ENCODE measurements at regions of chr1 and their contacts with region 1.

Region 1: DNA sequence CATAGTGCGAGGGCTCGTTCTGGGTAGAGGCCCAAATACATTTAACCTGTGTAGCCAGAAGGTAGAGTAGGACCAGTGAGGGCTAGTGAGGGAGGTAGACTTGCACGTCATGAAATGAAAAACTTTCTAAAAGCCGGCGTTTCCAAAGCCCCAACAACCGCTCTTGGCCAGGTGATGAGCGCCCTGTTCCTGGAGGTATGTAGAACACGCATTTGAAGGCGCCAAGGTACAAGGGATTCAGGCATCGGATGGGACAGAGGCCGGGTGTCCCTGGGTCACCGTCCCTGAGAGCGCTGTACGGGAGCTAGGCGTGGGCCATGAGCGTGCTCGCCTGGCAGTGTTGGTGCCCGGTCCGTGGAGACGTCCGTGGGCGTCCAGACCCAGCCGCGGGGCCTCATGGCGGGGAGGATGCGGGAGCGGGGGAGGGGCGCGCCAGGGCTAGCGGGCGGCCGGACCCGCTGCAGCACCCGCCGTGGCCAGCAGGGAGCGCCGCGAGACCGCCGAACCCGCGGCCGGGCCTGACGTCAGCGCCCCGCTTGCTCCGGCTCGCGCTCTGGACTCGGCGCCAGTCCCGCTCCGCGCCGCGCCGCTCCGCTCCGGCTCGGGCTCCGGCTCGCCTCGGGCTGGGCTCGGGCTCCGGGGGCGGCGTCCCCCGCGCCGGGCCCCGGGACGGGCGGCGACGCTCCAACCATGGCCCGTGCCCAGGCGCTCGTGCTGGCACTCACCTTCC is at the start of gene PTPRU:
- DNase-seq: peak; percentile 65 to 79 (median 73)
- H3K4me3 ChIP-seq: peak within 1 kb of the TSS; percentile 26 to 77 (median 36)
- H3K4me3 Mint-ChIP-seq: peak within 1 kb of the TSS; percentile 80 to 97
- H3K27ac ChIP-seq: no peak within 1 kb of the TSS
- H3K27ac Mint-ChIP-seq: peak within 1 kb of the TSS in 2 of 7 donors; percentile 13 to 68
- H3K4me1 ChIP-seq: peaks cover 24 to 31% of the 10 kb centered on the region in 2 donors
- H3K4me1 Mint-ChIP-seq: peaks cover 28% of the 10 kb centered on the region
- H3K27me3 ChIP-seq: peaks cover 26 to 61% of the 10 kb centered on the region in 2 donors
- H3K27me3 Mint-ChIP-seq: peaks cover 52 to 66% (median 57%) of the 10 kb centered on the region in 3 donors
- CTCF ChIP-seq: peak; percentile 86
- polyA plus RNA-seq, gene PTPRU: 0.42 to 1.4 TPM in 2 of 3 donors, not detected in the other

Region 2: GRCh38 chr1:29259802-29260441 is 23.8 kb after region 1 on chr1:
- intact Hi-C with region 1: no loop called
- DNase-seq: peak; percentile 9 to 32 (median 17)
- H3K4me3 ChIP-seq: peak overlapping the region; percentile 17 to 73 (median 41)
- H3K4me3 Mint-ChIP-seq: peak overlapping the region; percentile 77 to 91
- H3K27ac ChIP-seq: no peak overlapping the region
- H3K27ac Mint-ChIP-seq: no peak overlapping the region
- H3K4me1 ChIP-seq: peaks cover 9 to 11% of the 10 kb centered on the region in 2 donors
- H3K4me1 Mint-ChIP-seq: peaks cover 9% of the 10 kb centered on the region
- H3K27me3 ChIP-seq: peaks cover 28 to 59% of the 10 kb centered on the region in 2 donors
- H3K27me3 Mint-ChIP-seq: peaks cover 42 to 62% (median 54%) of the 10 kb centered on the region in 3 donors
- CTCF ChIP-seq: no peak

Region 3: DNA sequence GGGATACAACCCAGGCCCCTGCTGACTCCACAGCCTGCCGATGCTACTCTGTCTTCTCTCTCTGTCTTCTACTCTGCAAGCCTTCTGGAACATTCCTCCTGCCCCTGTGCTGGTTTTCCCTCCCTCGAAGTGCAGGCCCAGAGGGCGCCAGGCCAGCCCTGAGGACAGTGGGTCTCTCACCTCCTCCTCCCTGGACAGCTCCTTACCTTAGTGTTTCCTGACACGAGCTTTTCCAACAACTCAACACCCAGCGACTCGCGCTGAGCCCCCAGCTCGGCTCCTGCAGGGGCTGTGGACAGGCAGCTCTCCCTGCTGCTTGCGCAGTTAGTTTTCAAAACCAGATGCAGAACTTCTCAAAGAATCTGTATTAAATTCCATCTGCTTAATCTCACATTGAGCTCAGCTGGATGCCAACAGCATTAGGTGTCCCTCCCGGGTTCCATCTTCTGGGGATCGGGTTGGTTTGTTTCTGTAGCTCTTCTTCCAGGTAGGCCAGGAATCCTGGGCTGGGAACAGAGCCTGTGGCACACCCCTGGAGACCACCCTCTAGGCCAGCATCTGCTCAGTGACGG is 54.4 kb after region 1 on chr1:
- intact Hi-C with region 1: no loop called
- DNase-seq: no peak
- H3K4me3 ChIP-seq: no peak overlapping the region
- H3K4me3 Mint-ChIP-seq: no peak overlapping the region
- H3K27ac ChIP-seq: no peak overlapping the region
- H3K27ac Mint-ChIP-seq: no peak overlapping the region
- H3K4me1 ChIP-seq: no peaks in the 10 kb centered on the region
- H3K4me1 Mint-ChIP-seq: peaks cover 2% of the 10 kb centered on the region
- H3K27me3 ChIP-seq: no peaks in the 10 kb centered on the region
- H3K27me3 Mint-ChIP-seq: peaks cover 0 to 11% (median 8%) of the 10 kb centered on the region in 3 donors
- CTCF ChIP-seq: no peak

Region 4: DNA sequence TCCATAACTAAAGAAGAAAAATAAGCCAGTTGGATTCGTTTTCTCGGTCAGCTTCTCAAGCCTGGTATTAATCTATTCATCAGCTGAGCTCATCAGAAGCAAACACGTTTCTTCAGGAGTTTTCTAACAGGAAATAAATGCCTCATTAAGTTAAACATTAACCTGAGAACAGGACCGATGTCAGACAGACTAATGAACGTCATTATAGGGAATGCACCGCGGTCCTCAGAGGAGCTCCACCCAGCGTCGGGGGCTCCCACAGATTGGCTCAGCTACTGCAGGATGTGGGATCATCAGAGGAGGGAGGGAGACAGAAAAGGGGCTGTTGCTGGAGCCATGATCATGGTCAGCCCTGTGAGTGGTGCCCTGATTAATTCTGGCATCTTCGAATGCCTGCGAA is 615.6 kb after region 1 on chr1:
- intact Hi-C with region 1: loop called in 1 of 2 experiments (anchors 5 kb)
- DNase-seq: no peak
- H3K4me3 ChIP-seq: no peak overlapping the region
- H3K4me3 Mint-ChIP-seq: no peak overlapping the region
- H3K27ac ChIP-seq: no peak overlapping the region
- H3K27ac Mint-ChIP-seq: peak overlapping the region in 1 of 7 donors; percentile 31
- H3K4me1 ChIP-seq: no peaks in the 10 kb centered on the region
- H3K4me1 Mint-ChIP-seq: no peaks in the 10 kb centered on the region
- H3K27me3 ChIP-seq: no peaks in the 10 kb centered on the region
- H3K27me3 Mint-ChIP-seq: peaks cover 0 to 7% (median 4%) of the 10 kb centered on the region in 3 donors
- CTCF ChIP-seq: no peak

Region 5: GRCh38 chr1:30379684-30380624 is 1143.8 kb after region 1 on chr1:
- intact Hi-C with region 1: loop called (anchors 5 kb)
- DNase-seq: peak; percentile 44 to 59 (median 46)
- H3K4me3 ChIP-seq: no peak overlapping the region
- H3K4me3 Mint-ChIP-seq: no peak overlapping the region
- H3K27ac ChIP-seq: no peak overlapping the region
- H3K27ac Mint-ChIP-seq: no peak overlapping the region
- H3K4me1 ChIP-seq: peaks cover 0 to 3% of the 10 kb centered on the region in 2 donors
- H3K4me1 Mint-ChIP-seq: peaks cover 2% of the 10 kb centered on the region
- H3K27me3 ChIP-seq: no peaks in the 10 kb centered on the region
- H3K27me3 Mint-ChIP-seq: peaks cover 3 to 11% (median 7%) of the 10 kb centered on the region in 3 donors
- CTCF ChIP-seq: peak; percentile 88

Region 6: GRCh38 chr1:30707412-30708360 is 1471.6 kb after region 1 on chr1:
- intact Hi-C with region 1: loop called (anchors 5 kb)
- DNase-seq: peak; percentile 38 to 55 (median 42)
- H3K4me3 ChIP-seq: no peak overlapping the region
- H3K4me3 Mint-ChIP-seq: peak overlapping the region in 1 of 2 donors; percentile 36
- H3K27ac ChIP-seq: no peak overlapping the region
- H3K27ac Mint-ChIP-seq: no peak overlapping the region
- H3K4me1 ChIP-seq: no peaks in the 10 kb centered on the region
- H3K4me1 Mint-ChIP-seq: no peaks in the 10 kb centered on the region
- H3K27me3 ChIP-seq: no peaks in the 10 kb centered on the region
- H3K27me3 Mint-ChIP-seq: peaks cover 13 to 21% (median 13%) of the 10 kb centered on the region in 3 donors
- CTCF ChIP-seq: peak; percentile 84